ENCODE measurements at regions of chr12 and their contacts with region 1.

Region 1: DNA sequence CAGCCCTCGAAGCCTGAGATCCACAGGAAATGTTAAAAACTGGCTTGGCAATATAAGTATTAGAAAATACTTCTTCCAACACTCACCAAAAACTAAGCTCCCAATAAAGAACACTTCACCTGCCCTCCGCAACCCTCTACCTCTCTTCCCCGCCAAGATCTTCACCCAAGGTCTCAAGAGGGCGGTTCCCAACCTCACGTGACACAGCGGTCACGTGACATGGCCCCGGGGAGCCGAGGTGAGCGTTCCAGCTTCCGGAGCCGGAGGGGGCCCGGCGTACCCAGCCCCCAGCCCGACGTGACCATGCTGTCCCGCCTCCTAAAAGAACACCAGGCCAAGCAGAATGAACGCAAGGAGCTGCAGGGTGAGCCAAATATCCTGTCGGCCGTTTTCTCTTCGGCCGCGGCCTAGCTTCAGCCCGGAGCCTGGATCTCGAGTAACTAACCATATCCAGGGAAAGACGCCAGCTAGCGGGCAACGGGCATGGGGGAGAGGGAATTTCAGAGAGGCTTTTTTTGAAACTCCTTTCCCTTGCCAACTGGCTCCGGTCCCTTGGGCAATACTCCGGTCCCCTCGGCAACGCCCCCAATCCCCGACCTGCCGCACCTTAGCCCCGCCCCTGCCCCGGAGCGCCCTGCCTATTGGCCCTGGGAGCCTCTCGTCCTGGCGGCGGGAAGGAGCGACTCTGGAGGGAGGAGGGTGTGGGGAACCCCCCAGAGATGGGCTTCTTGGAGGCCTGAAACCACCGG is at the start of gene BLOC1S1:
- DNase-seq: peak; percentile 95
- H3K4me3 Mint-ChIP-seq: peak within 1 kb of the TSS; percentile 91
- H3K27ac Mint-ChIP-seq: peak within 1 kb of the TSS; percentile 95
- H3K4me1 Mint-ChIP-seq: peaks cover 46% of the 10 kb centered on the region
- H3K27me3 Mint-ChIP-seq: peaks cover 17% of the 10 kb centered on the region
- total RNA-seq, gene BLOC1S1: 164 to 181 TPM

Region 2: DNA sequence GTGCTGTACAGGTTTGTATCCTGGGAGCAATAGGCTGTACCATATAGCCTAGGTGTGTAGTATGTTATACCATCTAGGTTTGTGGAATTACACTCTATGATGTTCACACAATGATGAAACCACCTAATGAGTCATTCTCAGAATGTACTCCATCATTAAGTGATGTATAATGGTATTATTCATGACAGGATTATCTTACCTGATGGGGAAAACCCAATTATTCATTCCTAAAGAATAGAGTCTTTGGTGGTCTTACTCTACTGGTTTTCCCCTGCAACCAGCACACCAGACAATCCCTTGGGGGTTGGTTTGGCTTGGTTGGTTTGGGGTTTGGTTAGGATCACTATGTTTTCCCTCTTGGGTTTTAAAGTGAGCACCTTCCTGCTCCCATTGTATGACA is 92.0 kb before region 1 on chr12:
- CTCF ChIA-PET with region 1: no interaction called
- POLR2A ChIA-PET with region 1: no interaction called
- DNase-seq: no peak
- H3K4me3 Mint-ChIP-seq: no peak overlapping the region
- H3K27ac Mint-ChIP-seq: no peak overlapping the region
- H3K4me1 Mint-ChIP-seq: peaks cover 4% of the 10 kb centered on the region
- H3K27me3 Mint-ChIP-seq: peaks cover 27% of the 10 kb centered on the region

Region 3: GRCh38 chr12:55663391-55663790 is 52.6 kb before region 1 on chr12:
- CTCF ChIA-PET with region 1: no interaction called
- POLR2A ChIA-PET with region 1: no interaction called
- DNase-seq: no peak
- H3K4me3 Mint-ChIP-seq: no peak overlapping the region
- H3K27ac Mint-ChIP-seq: no peak overlapping the region
- H3K4me1 Mint-ChIP-seq: no peaks in the 10 kb centered on the region
- H3K27me3 Mint-ChIP-seq: peaks cover 18% of the 10 kb centered on the region

Region 4: DNA sequence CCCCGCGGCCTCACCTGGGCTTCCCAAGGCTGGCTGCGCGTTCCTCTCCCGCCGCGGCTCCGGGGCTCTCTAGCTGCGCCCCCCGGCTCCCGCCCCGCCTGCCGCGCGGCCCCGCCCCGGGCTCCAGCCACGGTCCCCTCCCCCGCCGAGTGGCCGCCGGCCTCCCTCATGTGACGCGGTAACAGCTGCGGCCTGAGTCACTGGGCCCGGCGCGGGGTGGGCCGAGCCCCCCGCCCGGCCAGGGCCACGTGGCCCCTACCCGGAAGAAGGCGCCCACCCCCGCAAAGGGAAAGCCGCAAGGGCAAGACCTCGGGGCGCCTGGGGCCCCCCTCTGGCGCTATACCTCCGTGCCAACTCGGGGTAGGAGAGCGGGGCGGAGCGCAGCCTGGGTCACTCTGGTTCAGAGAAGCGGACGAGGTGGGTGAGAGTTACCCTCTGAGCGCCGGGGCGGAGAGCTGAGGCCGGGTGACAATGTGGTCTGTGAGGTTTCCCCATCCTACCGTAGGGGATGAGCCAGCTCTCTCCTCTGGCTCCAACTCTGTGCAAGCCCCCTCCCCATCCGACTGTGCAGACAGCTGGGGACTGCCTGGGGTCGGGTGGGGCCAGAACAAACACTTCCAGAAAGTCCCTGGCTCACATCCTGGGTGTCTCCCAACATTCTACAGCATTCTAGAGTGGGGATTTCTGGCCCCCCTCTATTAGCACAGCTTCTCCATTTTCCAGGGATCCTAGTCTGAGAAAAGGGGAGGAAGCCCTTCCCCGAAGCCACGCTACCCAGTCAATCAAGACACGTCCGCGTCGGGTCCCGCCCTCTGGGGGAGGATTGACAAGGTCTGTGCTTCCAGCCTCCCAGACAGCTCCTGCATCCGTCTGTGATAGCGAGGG is 13.2 kb after region 1 on chr12 and contains the start of gene CD63:
- CTCF ChIA-PET with region 1: interaction called, 75 read pairs
- POLR2A ChIA-PET with region 1: interaction called, 4 read pairs
- DNase-seq: peak; percentile 58
- H3K4me3 Mint-ChIP-seq: peak within 1 kb of the TSS; percentile 87
- H3K27ac Mint-ChIP-seq: peak within 1 kb of the TSS; percentile 92
- H3K4me1 Mint-ChIP-seq: peaks cover 42% of the 10 kb centered on the region
- H3K27me3 Mint-ChIP-seq: no peaks in the 10 kb centered on the region
- total RNA-seq, gene CD63: 108 to 116 TPM

Region 5: DNA sequence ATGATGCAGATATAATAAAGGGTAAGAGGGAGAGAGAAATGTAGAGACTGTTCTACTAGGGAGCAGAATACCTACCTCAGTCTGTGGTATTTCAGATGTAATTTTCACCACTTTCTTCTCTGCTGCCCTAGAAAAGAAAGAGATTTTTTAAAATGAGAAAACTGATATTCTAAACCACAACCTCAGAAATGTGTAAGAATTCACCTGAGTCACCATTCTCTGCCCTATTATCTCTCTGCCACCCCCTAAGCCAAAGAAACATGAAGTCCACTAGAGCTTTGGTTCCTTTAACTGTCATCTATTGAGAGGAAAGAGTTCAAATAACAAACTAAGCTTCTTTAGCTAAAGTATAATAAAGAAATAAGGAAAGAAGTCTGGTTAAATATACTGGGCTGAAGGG is 79.9 kb after region 1 on chr12:
- CTCF ChIA-PET with region 1: no interaction called
- POLR2A ChIA-PET with region 1: no interaction called
- DNase-seq: no peak
- H3K4me3 Mint-ChIP-seq: no peak overlapping the region
- H3K27ac Mint-ChIP-seq: no peak overlapping the region
- H3K4me1 Mint-ChIP-seq: peaks cover 10% of the 10 kb centered on the region
- H3K27me3 Mint-ChIP-seq: no peaks in the 10 kb centered on the region

Measured in activated CD4-positive, alpha-beta T cell treated with anti-CD3 and anti-CD28 coated beads, Interleukin-2, amount 10 ng/mL, durations not matched to agents 7 days and 5 days (primary cell).